ENCODE measurements at regions of chr17 and their contacts with region 1.

Region 1: DNA sequence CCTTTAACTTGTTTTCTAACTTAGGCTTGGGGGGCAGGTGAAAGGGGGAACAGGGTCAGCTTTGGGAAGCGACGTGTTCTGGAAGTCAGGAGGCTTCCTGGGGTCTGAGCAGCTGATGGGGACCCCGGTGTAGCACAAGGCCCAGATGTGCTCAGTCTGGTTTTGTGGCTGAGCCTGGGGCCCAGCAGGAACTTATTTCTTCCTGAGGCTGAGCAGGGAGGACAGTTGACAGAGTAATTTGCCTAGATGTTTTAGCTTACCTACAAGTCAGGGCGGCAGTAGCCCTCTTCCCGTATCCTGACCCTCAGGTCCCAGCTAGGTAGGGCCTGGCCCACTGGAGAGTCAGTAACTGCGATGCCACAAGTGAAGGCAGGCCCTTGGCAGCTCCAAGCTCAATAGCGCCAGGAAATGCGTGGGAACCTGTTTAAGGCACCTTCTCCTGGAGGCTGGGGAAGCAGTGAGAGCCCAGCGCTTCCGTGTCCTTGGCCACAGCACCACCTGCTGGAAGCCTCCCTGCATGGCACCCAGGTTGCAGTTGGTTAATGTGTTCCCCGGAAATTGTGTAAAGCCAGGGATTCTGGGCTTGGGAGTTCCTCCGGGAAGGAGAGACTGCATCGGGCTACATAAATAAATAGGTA is 5.2 kb downstream of the CCR7 start:
- DNase-seq: peak; percentile 90
- ATAC-seq: peak; percentile 43
- H3K4me3 Mint-ChIP-seq: peak overlapping the region; percentile 77
- H3K27ac Mint-ChIP-seq: peak overlapping the region; percentile 93
- H3K4me1 Mint-ChIP-seq: peaks cover 91% of the 10 kb centered on the region
- H3K27me3 Mint-ChIP-seq: peaks cover 5% of the 10 kb centered on the region

Region 2: GRCh38 chr17:40362696-40363110 is 197.4 kb before region 1 on chr17:
- CTCF ChIA-PET with region 1: interaction called, 40 read pairs
- DNase-seq: peak; percentile 90
- ATAC-seq: peak; percentile 90
- H3K4me3 Mint-ChIP-seq: peak overlapping the region; percentile 68
- H3K27ac Mint-ChIP-seq: no peak overlapping the region
- H3K4me1 Mint-ChIP-seq: peaks cover 16% of the 10 kb centered on the region
- H3K27me3 Mint-ChIP-seq: peaks cover 31% of the 10 kb centered on the region

Region 3: DNA sequence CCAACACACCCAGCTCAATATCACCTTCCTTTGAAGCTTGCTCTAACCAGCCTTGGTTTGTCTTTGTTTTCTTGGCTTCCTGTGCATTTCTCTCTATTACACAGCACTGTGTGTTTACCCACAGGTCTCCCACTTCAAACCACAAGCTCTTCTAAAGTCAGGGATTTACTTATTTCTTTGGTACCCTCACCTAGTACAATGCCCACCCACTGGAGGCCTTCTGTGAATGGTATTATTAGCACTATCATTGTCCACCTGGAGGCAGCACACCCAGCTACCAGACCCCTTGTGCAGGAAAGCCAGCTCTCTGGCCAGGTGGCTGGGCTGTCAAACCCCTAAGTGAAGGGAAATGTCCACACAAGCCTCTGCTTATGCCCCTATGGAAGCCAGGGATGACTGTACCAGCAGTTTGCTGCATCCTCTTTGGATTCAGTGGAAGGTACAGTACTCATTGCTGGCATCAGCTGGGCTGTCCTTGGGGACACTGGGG is 133.0 kb before region 1 on chr17:
- CTCF ChIA-PET with region 1: interaction called, 15 read pairs
- DNase-seq: peak; percentile 67
- ATAC-seq: peak; percentile 89
- H3K4me3 Mint-ChIP-seq: no peak overlapping the region
- H3K27ac Mint-ChIP-seq: peak overlapping the region; percentile 41
- H3K4me1 Mint-ChIP-seq: peaks cover 32% of the 10 kb centered on the region
- H3K27me3 Mint-ChIP-seq: peaks cover 32% of the 10 kb centered on the region

Region 4: DNA sequence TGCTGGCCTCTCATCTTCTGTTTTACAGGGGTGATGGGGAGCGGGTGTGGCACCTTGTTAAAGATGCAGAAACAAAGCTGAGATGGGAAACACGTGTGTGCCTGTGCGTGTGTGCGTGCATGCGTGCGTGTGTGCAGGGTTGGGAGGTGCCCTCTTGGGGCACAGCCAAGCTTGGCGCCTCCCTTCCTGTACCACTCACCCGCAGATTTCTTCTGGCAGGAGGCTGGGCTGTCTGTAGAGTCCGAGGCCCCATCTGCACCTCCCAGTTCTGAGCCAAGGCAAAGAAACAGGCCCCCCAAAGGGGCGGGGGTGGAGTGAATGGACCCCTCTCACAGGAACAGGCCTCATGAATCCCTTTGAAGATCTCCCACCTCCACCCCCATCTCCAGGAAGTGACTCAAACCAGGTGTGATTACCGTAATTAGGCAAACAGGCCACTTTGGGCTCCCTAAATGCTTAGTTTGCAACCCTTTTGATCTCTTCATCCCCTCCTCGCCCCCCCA is 79.5 kb before region 1 on chr17:
- CTCF ChIA-PET with region 1: interaction called, 18 read pairs
- DNase-seq: peak; percentile 91
- ATAC-seq: peak; percentile 89
- H3K4me3 Mint-ChIP-seq: peak overlapping the region; percentile 49
- H3K27ac Mint-ChIP-seq: peak overlapping the region; percentile 94
- H3K4me1 Mint-ChIP-seq: peaks cover 53% of the 10 kb centered on the region
- H3K27me3 Mint-ChIP-seq: no peaks in the 10 kb centered on the region

Region 5: GRCh38 chr17:40598663-40599467 is 38.8 kb after region 1 on chr17:
- CTCF ChIA-PET with region 1: interaction called, 52 read pairs
- DNase-seq: peak; percentile 79
- ATAC-seq: peak; percentile 45
- H3K4me3 Mint-ChIP-seq: peak overlapping the region; percentile 49
- H3K27ac Mint-ChIP-seq: peak overlapping the region; percentile 95
- H3K4me1 Mint-ChIP-seq: peaks cover 80% of the 10 kb centered on the region
- H3K27me3 Mint-ChIP-seq: no peaks in the 10 kb centered on the region

Region 6: GRCh38 chr17:40622509-40622928 is 62.4 kb after region 1 on chr17:
- CTCF ChIA-PET with region 1: interaction called, 44 read pairs
- DNase-seq: peak; percentile 78
- ATAC-seq: peak; percentile 64
- H3K4me3 Mint-ChIP-seq: peak overlapping the region; percentile 33
- H3K27ac Mint-ChIP-seq: peak overlapping the region; percentile 65
- H3K4me1 Mint-ChIP-seq: peaks cover 57% of the 10 kb centered on the region
- H3K27me3 Mint-ChIP-seq: no peaks in the 10 kb centered on the region